Brain microvascular endothelial cell (primary cell): ENCODE measurements at regions of chr11 and their contacts with region 1.

Region 1: GRCh38 chr11:45383224-45383623 is 97.1 kb upstream of the SYT13 start:
- DNase-seq: peak; percentile 27
- H3K4me3 ChIP-seq: no peak overlapping the region
- H3K27ac ChIP-seq: no peak overlapping the region
- H3K27me3 ChIP-seq: peaks cover 16% of the 10 kb centered on the region
- CTCF ChIP-seq: no peak

Region 2: GRCh38 chr11:45057938-45058646 is 325.1 kb before region 1 on chr11:
- in situ Hi-C with region 1: no loop called
- DNase-seq: no peak
- H3K4me3 ChIP-seq: no peak overlapping the region
- H3K27ac ChIP-seq: no peak overlapping the region
- H3K27me3 ChIP-seq: no peaks in the 10 kb centered on the region
- CTCF ChIP-seq: no peak

Region 3: DNA sequence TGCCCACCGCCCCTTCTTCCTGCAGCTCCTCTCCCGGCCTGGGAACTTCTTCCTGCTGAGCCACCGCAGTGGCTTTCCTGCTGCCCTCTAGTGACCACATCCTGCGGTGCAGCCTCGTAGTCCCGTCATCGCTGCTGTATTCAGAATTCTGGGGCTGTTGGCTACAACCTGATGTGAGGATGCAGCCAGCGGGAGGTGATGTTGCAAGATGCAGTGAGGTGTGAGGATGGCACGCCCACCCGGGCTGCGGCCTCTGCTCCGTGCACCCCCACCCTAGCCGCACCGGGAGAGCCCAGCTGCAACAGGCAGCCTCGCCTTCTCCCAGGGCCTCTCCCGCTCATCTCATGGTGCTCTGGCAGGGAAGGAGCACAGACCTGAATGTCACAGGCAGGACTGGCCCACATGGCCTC is 272.1 kb after region 1 on chr11:
- in situ Hi-C with region 1: loop called (anchors 25 kb)
- DNase-seq: peak; percentile 60
- H3K4me3 ChIP-seq: no peak overlapping the region
- H3K27ac ChIP-seq: no peak overlapping the region
- H3K27me3 ChIP-seq: no peaks in the 10 kb centered on the region
- CTCF ChIP-seq: peak; percentile 98

Region 4: GRCh38 chr11:45771566-45772448 is 388.6 kb after region 1 on chr11:
- in situ Hi-C with region 1: loop called (anchors 25 kb)
- DNase-seq: peak; percentile 65
- H3K4me3 ChIP-seq: peak overlapping the region; percentile 55
- H3K27ac ChIP-seq: no peak overlapping the region
- H3K27me3 ChIP-seq: no peaks in the 10 kb centered on the region
- CTCF ChIP-seq: peak; percentile 96